CD4-positive, alpha-beta memory T cell (primary cell): ENCODE measurements at regions of chr13 and their contacts with region 1.

Region 1: DNA sequence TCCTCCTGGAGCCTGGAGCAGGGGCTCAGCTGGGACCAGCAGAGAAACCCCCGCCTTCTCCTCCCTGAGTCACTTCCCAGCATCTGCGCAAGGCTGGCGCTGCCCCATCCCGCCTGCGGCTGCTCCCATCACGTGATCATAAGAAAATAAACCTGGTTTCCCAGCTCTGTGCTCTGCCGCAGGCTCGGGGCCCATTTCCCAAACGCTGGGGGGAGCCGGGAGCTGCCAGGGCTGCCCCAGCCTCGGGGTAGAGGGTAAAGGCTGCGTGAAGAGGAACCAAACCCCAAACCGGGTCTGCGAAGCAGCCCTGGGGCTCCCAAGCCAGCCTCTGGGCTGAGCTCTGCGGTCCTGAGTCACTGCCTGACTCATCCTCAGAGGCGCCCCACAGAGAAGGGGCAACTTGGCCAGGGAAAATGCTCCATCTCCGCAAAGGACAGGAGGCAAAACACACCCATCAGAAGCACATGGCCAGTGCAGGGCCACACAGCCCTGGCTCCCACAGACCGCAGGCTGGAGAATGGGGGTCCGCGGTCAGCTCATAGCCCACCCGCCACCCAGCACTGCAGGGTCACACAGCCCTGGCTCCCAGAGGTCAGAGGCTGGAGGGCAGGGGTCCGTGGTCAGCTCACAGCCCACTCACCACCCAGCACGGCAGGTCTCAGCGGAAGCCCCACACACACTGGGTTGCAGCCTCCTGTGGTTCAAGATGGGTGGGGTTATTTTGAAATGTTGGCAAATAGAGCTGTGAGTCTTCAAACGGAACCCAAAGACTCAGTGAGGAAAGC is 67.1 kb downstream of the RASA3 start:
- DNase-seq: peak; percentile 55 to 88 (median 62)
- H3K4me3 ChIP-seq: peak overlapping the region; percentile 47 to 57
- H3K4me3 Mint-ChIP-seq: peak overlapping the region; percentile 77 to 93 (median 84)
- H3K27ac ChIP-seq: peak overlapping the region; percentile 37
- H3K27ac Mint-ChIP-seq: peak overlapping the region; percentile 89 to 96 (median 92)
- H3K4me1 ChIP-seq: peaks cover 60% of the 10 kb centered on the region
- H3K4me1 Mint-ChIP-seq: peaks cover 23 to 70% (median 51%) of the 10 kb centered on the region in 4 donors
- H3K27me3 ChIP-seq: no peaks in the 10 kb centered on the region
- H3K27me3 Mint-ChIP-seq: no peaks in the 10 kb centered on the region

Region 2: DNA sequence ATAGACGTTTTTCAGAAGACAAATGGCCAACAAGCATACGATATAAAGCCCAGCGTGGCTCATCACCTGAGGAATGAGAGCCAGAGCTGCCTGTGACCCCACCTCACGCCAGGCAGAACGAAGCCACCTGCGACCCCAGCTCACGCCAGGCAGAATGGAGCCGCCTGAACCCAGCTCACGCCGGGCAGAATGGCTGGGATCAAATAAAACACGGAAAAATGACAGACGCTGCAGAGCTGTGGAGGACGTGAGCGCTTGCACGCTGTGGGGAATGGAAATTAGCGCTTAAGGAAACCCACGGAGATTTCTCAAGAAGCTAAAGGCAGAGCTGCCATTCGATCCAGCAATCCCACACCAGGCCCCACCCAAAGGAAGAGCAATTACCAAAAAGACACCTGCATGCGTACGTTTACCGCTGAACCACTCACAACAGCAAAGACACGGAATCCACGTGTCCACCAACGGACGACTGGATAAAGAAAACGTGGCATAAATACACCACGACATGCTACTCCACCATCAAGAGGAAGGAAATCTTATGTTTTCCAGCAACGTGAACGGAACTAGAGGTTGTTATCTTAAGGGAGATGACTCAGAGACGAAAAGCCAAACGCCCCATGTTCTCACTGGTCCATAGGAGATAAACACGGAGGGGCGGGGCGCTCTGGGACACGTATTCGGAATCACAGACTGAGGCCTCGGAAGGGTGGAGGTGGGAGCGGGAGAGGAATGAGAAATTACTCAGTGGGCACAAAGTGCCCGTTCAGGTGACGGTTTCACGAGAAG is 60.7 kb before region 1 on chr13:
- CTCF ChIA-PET with region 1: no interaction called
- POLR2A ChIA-PET with region 1: no interaction called
- intact Hi-C with region 1: loop called (anchors 10 kb)
- DNase-seq: no peak
- H3K4me3 ChIP-seq: no peak overlapping the region
- H3K4me3 Mint-ChIP-seq: peak overlapping the region in 2 of 8 donors; percentile 42 to 45
- H3K27ac ChIP-seq: no peak overlapping the region
- H3K27ac Mint-ChIP-seq: peak overlapping the region in 3 of 7 donors; percentile 1 to 51 (median 49)
- H3K4me1 ChIP-seq: no peaks in the 10 kb centered on the region
- H3K4me1 Mint-ChIP-seq: peaks cover 0 to 6% (median 0%) of the 10 kb centered on the region in 4 donors
- H3K27me3 ChIP-seq: no peaks in the 10 kb centered on the region
- H3K27me3 Mint-ChIP-seq: no peaks in the 10 kb centered on the region

Region 3: DNA sequence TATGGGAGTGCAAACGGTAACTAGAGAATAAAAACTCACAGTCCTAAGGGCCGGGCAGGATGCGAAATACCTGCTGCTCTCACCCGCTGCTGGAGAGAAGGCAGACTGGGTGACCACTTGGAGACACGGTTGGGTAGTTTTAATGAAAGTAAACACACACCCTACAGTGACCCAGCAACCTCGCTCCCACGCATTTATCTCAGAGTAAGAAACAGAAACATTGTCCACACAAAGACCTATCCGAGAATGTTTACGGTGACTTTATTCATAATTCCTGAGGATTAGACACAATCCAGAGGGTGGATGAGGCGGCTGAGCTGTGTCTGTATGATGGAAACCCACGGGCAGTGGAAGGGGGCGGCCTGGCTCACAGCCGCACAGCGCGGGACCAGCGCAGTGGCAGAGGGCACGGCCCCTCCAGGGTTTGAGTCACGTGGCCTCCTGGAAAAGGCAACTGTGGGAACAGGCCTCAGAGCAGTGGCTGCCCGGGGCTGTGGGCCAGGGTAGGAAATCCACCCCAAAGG is 17.9 kb before region 1 on chr13:
- CTCF ChIA-PET with region 1: no interaction called
- POLR2A ChIA-PET with region 1: interaction called, 11 read pairs
- intact Hi-C with region 1: no loop called
- DNase-seq: no peak
- H3K4me3 ChIP-seq: no peak overlapping the region
- H3K4me3 Mint-ChIP-seq: peak overlapping the region in 4 of 8 donors; percentile 17 to 45 (median 18)
- H3K27ac ChIP-seq: no peak overlapping the region
- H3K27ac Mint-ChIP-seq: peak overlapping the region in 6 of 7 donors; percentile 0 to 91 (median 62)
- H3K4me1 ChIP-seq: peaks cover 53% of the 10 kb centered on the region
- H3K4me1 Mint-ChIP-seq: peaks cover 30 to 78% (median 56%) of the 10 kb centered on the region in 4 donors
- H3K27me3 ChIP-seq: no peaks in the 10 kb centered on the region
- H3K27me3 Mint-ChIP-seq: no peaks in the 10 kb centered on the region

Region 4: DNA sequence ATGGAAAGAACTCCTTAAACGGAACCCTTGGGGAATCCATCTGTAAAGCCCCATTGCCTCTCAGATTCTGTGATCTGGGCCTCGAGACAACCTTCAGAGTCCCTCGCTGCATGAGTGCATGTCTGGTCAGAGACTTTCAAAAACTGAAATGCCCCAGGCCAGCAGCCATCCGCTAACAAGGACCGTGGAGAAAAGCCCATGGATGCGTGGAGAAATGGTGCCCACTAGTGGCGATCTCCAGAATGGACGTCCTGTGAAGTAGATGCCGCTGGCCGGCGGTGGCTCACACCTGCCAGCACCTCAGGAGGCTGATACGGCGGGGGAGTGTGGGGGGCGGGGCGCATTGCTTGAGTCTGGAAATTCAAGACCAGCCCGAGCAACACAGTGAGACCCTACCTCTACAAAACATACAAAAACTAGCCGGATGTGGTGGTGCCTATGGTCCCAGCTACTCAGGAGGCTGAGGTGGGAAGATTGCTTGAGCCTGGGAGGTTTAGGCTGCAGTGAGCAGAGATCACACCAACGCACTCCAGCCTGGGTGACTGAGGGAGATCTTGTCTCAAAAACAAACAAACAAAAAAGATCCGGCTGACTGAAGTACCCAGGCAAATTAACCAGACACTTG is 161.5 kb after region 1 on chr13:
- CTCF ChIA-PET with region 1: interaction called, 6 read pairs
- POLR2A ChIA-PET with region 1: interaction called, 5 read pairs
- intact Hi-C with region 1: loop called (anchors 1 kb)
- DNase-seq: peak; percentile 75 to 80 (median 78)
- H3K4me3 ChIP-seq: no peak overlapping the region
- H3K4me3 Mint-ChIP-seq: peak overlapping the region; percentile 7 to 74 (median 48)
- H3K27ac ChIP-seq: no peak overlapping the region
- H3K27ac Mint-ChIP-seq: peak overlapping the region; percentile 69 to 89 (median 78)
- H3K4me1 ChIP-seq: peaks cover 34% of the 10 kb centered on the region
- H3K4me1 Mint-ChIP-seq: peaks cover 26 to 45% (median 36%) of the 10 kb centered on the region in 4 donors
- H3K27me3 ChIP-seq: no peaks in the 10 kb centered on the region
- H3K27me3 Mint-ChIP-seq: peaks cover 3% of the 10 kb centered on the region in 2 donors

Region 5: DNA sequence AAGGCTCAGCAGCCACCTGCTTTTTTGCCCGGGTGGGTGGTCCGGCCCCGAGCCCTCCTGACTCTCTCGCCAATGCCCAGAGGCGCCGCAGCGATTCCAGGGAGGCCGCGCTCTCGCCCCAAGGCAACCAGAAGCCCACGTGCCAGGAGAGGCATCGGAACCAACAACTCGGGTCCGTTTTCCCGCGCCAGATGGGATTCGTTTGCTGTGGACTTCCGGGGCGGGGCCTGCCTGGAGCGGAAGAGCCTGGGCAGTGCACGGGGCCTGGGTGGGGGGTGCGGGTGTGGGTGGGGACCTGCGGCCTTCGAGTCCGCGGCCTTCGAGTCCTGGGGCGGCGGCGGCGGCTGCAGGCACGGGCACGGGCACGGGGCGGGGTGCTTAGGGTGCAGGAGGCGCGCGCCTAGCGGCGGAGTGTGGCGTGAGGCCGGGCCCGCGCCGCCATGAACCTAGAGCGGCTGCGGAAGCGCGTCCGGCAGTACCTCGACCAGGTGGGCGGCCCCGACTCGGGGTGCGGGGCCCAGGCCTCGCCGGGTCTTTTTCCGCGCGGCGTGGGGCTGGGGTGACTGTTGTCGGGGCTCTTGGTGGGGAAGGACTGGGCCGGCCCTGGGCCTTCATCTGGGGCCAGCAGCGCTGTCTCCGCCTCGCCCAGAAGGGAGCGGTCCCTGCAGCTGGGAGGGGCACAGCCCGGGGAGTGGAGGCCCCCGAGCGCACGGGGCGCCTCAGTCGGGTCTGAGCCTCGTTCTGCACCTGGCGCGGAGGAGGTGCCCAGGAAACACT is 169.5 kb after region 1 on chr13 and contains the start of gene CDC16:
- CTCF ChIA-PET with region 1: no interaction called
- POLR2A ChIA-PET with region 1: no interaction called
- intact Hi-C with region 1: loop called (anchors 2 kb)
- DNase-seq: peak; percentile 63 to 77 (median 71)
- H3K4me3 ChIP-seq: peak within 1 kb of the TSS; percentile 26 to 66
- H3K4me3 Mint-ChIP-seq: peak within 1 kb of the TSS; percentile 83 to 92 (median 89)
- H3K27ac ChIP-seq: peak within 1 kb of the TSS; percentile 46
- H3K27ac Mint-ChIP-seq: peak within 1 kb of the TSS; percentile 64 to 88 (median 75)
- H3K4me1 ChIP-seq: peaks cover 21% of the 10 kb centered on the region
- H3K4me1 Mint-ChIP-seq: peaks cover 16 to 33% (median 27%) of the 10 kb centered on the region in 4 donors
- H3K27me3 ChIP-seq: no peaks in the 10 kb centered on the region
- H3K27me3 Mint-ChIP-seq: peaks cover 3% of the 10 kb centered on the region in 2 donors
- total RNA-seq, gene CDC16: 86.0 to 87.9 TPM

Region 6: GRCh38 chr13:114281351-114282040 is 216.2 kb after region 1 on chr13 and contains the start of gene UPF3A:
- CTCF ChIA-PET with region 1: no interaction called
- POLR2A ChIA-PET with region 1: interaction called, 13 read pairs
- intact Hi-C with region 1: no loop called
- DNase-seq: peak; percentile 89 to 95 (median 91)
- H3K4me3 ChIP-seq: peak within 1 kb of the TSS; percentile 43 to 79
- H3K4me3 Mint-ChIP-seq: peak within 1 kb of the TSS; percentile 89 to 98 (median 93)
- H3K27ac ChIP-seq: peak within 1 kb of the TSS; percentile 75
- H3K27ac Mint-ChIP-seq: peak within 1 kb of the TSS; percentile 94 to 99 (median 97)
- H3K4me1 ChIP-seq: peaks cover 60% of the 10 kb centered on the region
- H3K4me1 Mint-ChIP-seq: peaks cover 25 to 67% (median 42%) of the 10 kb centered on the region in 4 donors
- H3K27me3 ChIP-seq: no peaks in the 10 kb centered on the region
- H3K27me3 Mint-ChIP-seq: no peaks in the 10 kb centered on the region
- total RNA-seq, gene UPF3A: 85.9 to 91.2 TPM